Posterior cingulate gyrus (tissue), 11 donors: ENCODE measurements at regions of chr6 and their contacts with region 1.

Region 1: GRCh38 chr6:43143235-43144124 is 27.6 kb upstream of the SRF start:
- DNase-seq: peak; percentile 69 to 98 (median 84)

Region 2: DNA sequence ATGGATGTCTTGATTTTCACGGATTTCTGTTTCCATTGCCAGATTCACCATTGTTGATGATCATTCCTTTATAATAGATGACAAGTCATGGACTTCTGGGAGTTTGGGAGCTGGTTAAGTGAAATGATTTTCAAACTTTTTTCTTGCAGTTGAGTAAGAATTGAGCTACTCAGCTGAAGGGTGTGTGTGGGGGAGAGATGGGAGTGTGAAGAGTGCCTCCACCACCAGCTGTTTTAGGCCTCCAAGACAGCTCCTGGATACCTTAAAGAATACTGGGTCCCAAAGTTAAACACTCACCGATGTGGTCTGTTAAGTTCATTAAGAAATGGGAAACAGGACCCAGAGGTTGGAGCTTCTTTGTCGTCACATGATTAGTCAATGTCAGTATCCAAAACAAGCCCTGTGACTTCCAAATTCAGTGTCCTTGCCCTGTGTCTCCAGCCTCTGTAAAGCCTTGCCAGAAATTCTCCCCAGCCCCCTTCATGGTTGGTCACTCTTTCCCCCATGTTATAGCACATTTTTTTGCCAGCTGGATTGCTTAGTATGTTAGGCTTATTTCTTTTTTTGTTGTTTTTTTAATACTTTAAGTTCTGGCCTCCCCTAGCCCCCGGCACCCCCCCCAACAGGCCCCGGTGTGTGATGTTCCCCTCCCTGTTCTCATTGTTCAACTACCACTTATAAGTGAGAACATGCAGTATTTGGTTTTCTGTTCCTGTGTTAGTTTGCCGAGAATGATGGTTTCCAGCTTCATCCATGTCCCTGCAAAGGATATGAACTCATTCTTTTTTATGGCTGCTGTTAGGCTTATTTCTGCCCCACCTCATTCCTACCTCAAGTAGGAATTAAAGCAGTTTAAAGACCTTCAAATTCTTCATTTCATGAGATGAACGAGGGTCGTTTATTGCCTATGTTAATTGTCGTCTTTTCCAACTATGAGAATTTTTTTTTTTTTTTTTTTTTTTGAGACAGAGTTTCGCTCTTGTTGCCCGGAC is 334.7 kb before region 1 on chr6:
- intact Hi-C with region 1: no loop called
- DNase-seq: no peak

Region 3: GRCh38 chr6:42901536-42901957 is 241.9 kb before region 1 on chr6:
- intact Hi-C with region 1: loop called (anchors 1 kb)
- DNase-seq: peak in 8 of 10 donors; percentile 53 to 94 (median 68)

Region 4: GRCh38 chr6:43075670-43076463 is 67.6 kb before region 1 on chr6 and contains the start of gene PTK7:
- intact Hi-C with region 1: loop called (anchors 5 kb)
- DNase-seq: peak in 5 of 10 donors; percentile 23 to 90 (median 44)